CD4-positive, alpha-beta T cell (primary cell): ENCODE measurements at regions of chr19 and their contacts with region 1.

Region 1: DNA sequence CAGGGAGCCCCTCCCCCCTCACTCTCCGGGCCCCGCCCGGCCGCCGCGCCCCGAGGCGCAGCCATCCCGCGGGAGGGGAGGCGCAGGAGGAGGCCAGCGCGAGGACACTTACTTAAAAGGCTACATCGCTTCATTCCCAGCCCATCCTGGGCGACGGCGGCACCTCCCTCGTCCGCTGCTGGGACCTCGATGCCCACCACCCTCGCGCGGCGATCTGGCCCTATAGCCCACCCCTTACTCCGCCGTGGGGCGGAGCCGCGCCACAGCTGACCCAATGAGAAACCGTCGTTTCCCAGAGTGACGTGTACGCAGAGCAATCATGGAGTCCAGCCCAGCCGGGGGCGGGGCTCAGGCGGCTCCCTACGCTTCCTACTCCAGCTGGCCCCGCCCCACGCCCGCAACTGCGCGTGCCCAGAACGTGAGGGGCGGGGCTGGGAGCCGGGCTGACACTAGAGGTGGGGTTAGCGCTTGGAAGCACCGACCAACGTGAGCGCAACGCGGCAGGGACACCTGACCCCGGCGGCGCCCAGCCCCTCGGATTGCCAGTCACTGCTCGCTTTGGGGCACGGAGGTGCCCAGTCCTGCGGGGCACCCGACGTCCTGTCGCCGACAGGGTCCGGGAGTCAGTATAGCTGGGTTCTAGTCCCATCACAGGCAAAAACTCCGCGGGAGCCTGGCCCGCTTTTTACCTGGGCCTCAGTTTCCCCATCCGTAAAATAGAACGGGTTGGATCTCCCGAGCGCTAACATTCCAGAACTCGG is at the start of gene ANKRD27:
- DNase-seq: peak; percentile 94 to 99 (median 98)
- ATAC-seq: peak; percentile 94
- H3K4me3 ChIP-seq: peak within 1 kb of the TSS; percentile 89
- H3K4me3 Mint-ChIP-seq: peak within 1 kb of the TSS; percentile 95
- H3K27ac ChIP-seq: peak within 1 kb of the TSS in 1 of 2 donors; percentile 80
- H3K27ac Mint-ChIP-seq: peak within 1 kb of the TSS; percentile 79
- H3K4me1 ChIP-seq: peaks cover 53% of the 10 kb centered on the region
- H3K4me1 Mint-ChIP-seq: peaks cover 50% of the 10 kb centered on the region
- H3K27me3 ChIP-seq: peaks cover 14 to 21% of the 10 kb centered on the region in 2 experiments
- H3K27me3 Mint-ChIP-seq: peaks cover 8% of the 10 kb centered on the region
- CTCF ChIP-seq: no peak
- total RNA-seq, gene ANKRD27: 16.5 to 17.6 TPM

Region 2: DNA sequence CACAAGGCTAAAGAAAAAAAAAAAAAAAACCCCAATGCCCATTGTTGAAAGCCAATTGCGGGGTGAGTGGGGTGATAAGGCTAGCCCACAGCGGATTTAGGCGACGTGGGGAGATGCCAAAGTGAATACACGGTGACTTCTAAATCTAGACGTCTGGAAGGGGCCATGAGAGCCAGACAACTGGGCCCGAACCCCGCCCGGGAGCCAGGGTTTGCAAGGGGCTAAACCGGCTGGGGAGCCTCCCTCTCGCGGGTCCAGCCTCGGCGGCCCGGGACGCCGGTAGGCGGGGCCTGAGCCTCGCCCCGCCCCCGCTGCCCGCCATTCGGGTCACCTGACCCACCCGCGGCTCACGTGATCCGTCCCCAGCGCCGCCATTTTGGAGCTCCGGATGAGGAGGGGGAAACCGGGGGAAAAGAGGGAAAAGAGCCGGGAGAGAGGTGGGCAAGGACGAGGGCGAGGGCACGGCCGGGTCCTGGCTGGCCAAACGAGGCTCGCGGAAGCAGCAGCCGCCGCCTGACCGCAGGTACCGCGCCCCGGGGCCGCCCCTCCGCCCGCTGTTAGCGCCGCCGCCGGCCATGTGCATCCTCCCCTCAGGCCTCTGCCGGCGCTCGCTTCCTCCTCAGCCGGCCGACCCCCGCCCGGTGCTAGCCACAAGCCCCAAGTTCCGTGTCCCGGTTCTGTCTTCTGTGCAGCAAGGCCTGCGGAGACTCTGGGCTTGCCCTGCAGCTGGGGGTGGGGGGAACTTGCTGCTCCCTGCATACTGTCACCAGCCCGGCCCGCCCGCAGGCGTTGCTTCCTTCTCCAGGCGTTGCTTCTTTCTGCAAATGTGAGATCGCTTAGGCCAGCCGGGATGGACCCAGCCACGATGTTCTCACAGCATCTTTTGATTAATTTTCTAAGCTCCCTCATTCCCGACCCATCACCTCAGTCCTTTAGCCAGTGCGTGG is 329.6 kb before region 1 on chr19 and contains the start of gene ZNF507:
- CTCF ChIA-PET with region 1: no interaction called
- POLR2A ChIA-PET with region 1: interaction called, 3 read pairs
- intact Hi-C with region 1: loop called in 1 of 2 experiments (anchors 10 kb)
- DNase-seq: peak; percentile 64 to 88 (median 75)
- ATAC-seq: peak; percentile 84
- H3K4me3 ChIP-seq: peak within 1 kb of the TSS; percentile 92
- H3K4me3 Mint-ChIP-seq: peak within 1 kb of the TSS; percentile 96
- H3K27ac ChIP-seq: peak within 1 kb of the TSS; percentile 58 to 82
- H3K27ac Mint-ChIP-seq: peak within 1 kb of the TSS; percentile 87
- H3K4me1 ChIP-seq: peaks cover 13% of the 10 kb centered on the region
- H3K4me1 Mint-ChIP-seq: peaks cover 50% of the 10 kb centered on the region
- H3K27me3 ChIP-seq: no peaks in the 10 kb centered on the region
- H3K27me3 Mint-ChIP-seq: peaks cover 5% of the 10 kb centered on the region
- CTCF ChIP-seq: no peak
- total RNA-seq, gene ZNF507: 30.4 to 31.3 TPM

Region 3: DNA sequence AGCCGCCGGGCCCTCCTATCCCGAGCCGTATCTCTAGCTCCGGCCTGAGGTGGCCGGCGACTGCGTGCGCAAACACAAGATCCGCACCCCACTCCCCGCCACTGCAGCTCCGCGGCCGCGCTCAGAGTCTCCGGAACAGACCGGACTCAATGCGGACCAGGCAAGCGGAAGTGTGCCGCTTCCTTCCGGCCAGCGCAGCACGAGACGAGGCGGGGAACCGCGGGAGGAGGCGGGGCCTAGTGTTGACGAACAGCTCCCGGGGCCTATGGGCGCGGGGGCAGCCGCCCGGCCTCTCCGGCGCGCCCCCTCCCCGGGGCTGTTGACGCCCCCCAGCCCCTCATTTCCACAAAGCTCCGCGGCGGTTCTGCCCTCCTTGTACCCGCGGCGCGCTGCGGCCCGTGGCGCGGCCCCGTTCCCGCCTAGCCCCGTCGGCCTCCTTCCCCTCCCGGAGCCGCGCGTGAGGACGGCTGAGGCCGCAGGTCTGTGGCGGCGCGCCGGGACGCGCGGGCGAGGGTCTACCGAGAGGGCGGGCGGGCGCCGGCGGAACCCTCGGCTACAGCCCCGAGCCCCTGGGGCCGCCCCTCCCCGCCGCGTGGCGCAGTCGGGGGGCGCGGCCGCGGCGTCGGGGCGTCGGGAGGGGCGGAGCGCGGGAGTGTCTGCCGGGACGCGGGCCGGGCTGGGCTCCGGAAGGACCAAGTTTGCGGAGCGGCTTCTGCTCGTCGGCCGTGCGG is 269.5 kb before region 1 on chr19 and contains the start of gene DPY19L3:
- CTCF ChIA-PET with region 1: no interaction called
- POLR2A ChIA-PET with region 1: interaction called, 6 read pairs
- intact Hi-C with region 1: loop called in 1 of 2 experiments (anchors 10 kb)
- DNase-seq: peak; percentile 77 to 93 (median 85)
- ATAC-seq: peak; percentile 88
- H3K4me3 ChIP-seq: peak within 1 kb of the TSS; percentile 76
- H3K4me3 Mint-ChIP-seq: peak within 1 kb of the TSS; percentile 89
- H3K27ac ChIP-seq: peak within 1 kb of the TSS; percentile 72 to 80
- H3K27ac Mint-ChIP-seq: peak within 1 kb of the TSS; percentile 91
- H3K4me1 ChIP-seq: peaks cover 19% of the 10 kb centered on the region
- H3K4me1 Mint-ChIP-seq: peaks cover 30% of the 10 kb centered on the region
- H3K27me3 ChIP-seq: no peaks in the 10 kb centered on the region
- H3K27me3 Mint-ChIP-seq: no peaks in the 10 kb centered on the region
- CTCF ChIP-seq: no peak
- total RNA-seq, gene DPY19L3: 7.3 to 8.5 TPM

Region 4: DNA sequence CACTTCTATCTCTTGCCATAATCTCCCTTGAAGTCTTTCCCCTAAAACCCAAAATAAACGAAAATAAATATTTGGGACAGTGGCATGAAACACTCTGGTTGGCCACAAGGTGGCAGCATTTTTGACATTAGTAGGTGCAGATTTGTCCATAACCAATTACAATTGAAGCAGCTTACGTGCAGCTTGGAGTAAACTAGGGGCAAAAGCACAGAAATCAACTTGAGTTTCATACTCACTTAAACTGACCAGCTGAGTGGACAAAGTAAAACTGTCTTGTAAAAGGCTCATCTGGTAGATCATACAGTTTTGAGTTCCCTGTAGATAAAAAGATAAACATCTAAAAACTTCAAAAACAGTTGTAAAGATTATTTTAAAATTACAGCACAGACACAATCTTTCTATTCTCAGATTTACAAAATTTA is 75.4 kb before region 1 on chr19:
- CTCF ChIA-PET with region 1: interaction called, 3 read pairs
- POLR2A ChIA-PET with region 1: interaction called, 3 read pairs
- intact Hi-C with region 1: loop called in 1 of 2 experiments (anchors 5 kb)
- DNase-seq: peak in 11 of 14 experiments; percentile 7 to 82 (median 33)
- ATAC-seq: peak; percentile 75
- H3K4me3 ChIP-seq: no peak overlapping the region
- H3K4me3 Mint-ChIP-seq: no peak overlapping the region
- H3K27ac ChIP-seq: no peak overlapping the region
- H3K27ac Mint-ChIP-seq: no peak overlapping the region
- H3K4me1 ChIP-seq: no peaks in the 10 kb centered on the region
- H3K4me1 Mint-ChIP-seq: peaks cover 6% of the 10 kb centered on the region
- H3K27me3 ChIP-seq: no peaks in the 10 kb centered on the region
- H3K27me3 Mint-ChIP-seq: no peaks in the 10 kb centered on the region
- CTCF ChIP-seq: peak; percentile 85

Region 5: GRCh38 chr19:32642771-32643170 is 32.4 kb before region 1 on chr19:
- CTCF ChIA-PET with region 1: no interaction called
- POLR2A ChIA-PET with region 1: interaction called, 3 read pairs
- intact Hi-C with region 1: loop called (anchors 2 to 5 kb)
- DNase-seq: peak; percentile 39 to 84 (median 61)
- ATAC-seq: peak; percentile 98
- H3K4me3 ChIP-seq: no peak overlapping the region
- H3K4me3 Mint-ChIP-seq: peak overlapping the region; percentile 71
- H3K27ac ChIP-seq: peak overlapping the region in 1 of 2 donors; percentile 30
- H3K27ac Mint-ChIP-seq: peak overlapping the region; percentile 76
- H3K4me1 ChIP-seq: peaks cover 28% of the 10 kb centered on the region
- H3K4me1 Mint-ChIP-seq: peaks cover 28% of the 10 kb centered on the region
- H3K27me3 ChIP-seq: no peaks in the 10 kb centered on the region
- H3K27me3 Mint-ChIP-seq: no peaks in the 10 kb centered on the region
- CTCF ChIP-seq: no peak

Region 6: DNA sequence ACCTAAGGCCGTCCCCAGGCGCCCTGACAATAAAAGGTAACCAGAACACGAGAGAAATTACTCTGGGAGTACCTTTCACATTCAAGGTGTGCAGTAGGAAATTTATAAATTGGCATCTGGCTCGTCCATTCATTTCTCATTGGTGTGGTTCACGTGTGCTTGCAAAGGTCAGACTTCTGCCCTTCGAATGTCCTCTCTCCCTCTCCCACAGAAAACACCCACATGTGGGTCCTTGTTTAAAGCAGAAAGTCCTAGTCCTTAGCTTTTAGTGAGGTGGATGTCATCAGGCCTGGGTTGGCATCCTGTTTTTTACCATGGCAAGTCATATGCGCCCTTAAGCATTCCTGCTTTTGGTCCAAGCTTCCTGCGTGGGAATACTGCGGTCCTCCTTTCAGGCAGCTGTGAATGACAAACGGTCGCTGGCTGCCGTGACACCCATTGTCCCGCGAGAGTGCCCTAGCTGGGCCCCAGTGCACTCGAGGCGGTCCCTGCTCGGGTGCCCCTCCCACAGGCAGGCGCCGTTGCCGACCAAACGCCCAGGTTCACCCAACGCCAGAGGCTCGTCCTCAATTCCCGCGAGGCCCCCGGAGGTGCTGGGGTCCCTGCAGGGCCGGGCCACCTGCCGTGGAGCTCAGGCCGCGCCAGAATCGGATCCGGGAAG is 16.3 kb after region 1 on chr19 and contains the start of gene NUDT19:
- CTCF ChIA-PET with region 1: interaction called, 5 read pairs
- POLR2A ChIA-PET with region 1: interaction called, 58 read pairs
- intact Hi-C with region 1: loop called in 1 of 2 experiments (anchors 2 kb)
- DNase-seq: peak; percentile 50 to 86 (median 72)
- ATAC-seq: peak; percentile 77
- H3K4me3 ChIP-seq: peak within 1 kb of the TSS; percentile 65
- H3K4me3 Mint-ChIP-seq: peak within 1 kb of the TSS; percentile 96
- H3K27ac ChIP-seq: peak within 1 kb of the TSS; percentile 31 to 55
- H3K27ac Mint-ChIP-seq: peak within 1 kb of the TSS; percentile 80
- H3K4me1 ChIP-seq: peaks cover 44% of the 10 kb centered on the region
- H3K4me1 Mint-ChIP-seq: peaks cover 51% of the 10 kb centered on the region
- H3K27me3 ChIP-seq: no peaks in the 10 kb centered on the region
- H3K27me3 Mint-ChIP-seq: no peaks in the 10 kb centered on the region
- CTCF ChIP-seq: no peak
- total RNA-seq, gene NUDT19: 7.9 to 8.2 TPM

Region 7: DNA sequence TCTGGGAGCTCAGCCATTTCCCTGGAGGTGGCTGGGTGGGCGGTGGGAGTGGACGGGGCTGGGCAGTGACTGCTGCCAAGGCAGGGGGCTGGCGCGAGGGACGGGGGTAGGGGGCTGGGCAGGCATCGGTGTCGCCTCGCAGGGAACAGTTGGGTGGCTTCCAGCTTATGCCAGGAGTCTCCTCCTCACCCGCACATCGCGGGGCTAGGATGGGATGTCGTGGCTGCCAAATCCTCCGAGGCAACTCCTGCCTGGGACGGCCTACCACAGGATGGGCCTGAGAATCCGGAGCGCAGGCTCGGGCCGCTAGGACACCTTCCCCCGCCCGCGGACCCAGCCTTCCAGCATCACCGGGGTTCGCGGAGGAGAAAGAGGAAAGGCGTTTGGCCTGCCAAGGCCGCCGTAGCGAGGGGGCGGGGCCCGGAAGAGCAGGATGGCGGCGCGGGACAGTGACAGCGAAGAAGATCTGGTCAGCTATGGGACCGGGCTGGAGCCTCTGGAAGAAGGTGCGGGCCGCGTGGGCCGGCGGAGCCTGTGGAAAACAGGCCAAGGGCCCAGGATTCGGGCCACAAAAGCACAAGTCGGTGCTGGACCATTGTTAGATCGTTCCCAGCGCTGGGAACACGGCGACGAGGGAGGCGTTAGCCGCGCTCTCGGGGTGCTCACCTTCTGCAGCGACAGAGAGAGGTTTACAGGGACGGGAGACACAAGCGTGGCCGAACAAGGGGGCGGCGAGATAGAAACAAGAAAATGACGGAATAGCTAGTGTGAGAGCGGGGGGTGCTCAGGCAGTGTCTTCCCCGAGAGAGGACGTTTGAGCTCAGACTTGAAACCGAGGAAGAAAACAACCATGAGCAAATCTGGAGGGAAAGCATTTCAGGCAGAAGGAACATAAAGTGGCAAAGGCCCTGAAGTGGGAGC is 405.9 kb after region 1 on chr19 and contains the start of gene GPATCH1:
- CTCF ChIA-PET with region 1: interaction called, 5 read pairs
- POLR2A ChIA-PET with region 1: no interaction called
- intact Hi-C with region 1: loop called in 1 of 2 experiments (anchors 10 kb)
- DNase-seq: peak; percentile 70 to 90 (median 80)
- ATAC-seq: peak; percentile 94
- H3K4me3 ChIP-seq: peak within 1 kb of the TSS; percentile 86
- H3K4me3 Mint-ChIP-seq: peak within 1 kb of the TSS; percentile 97
- H3K27ac ChIP-seq: peak within 1 kb of the TSS; percentile 59 to 71
- H3K27ac Mint-ChIP-seq: peak within 1 kb of the TSS; percentile 89
- H3K4me1 ChIP-seq: peaks cover 22% of the 10 kb centered on the region
- H3K4me1 Mint-ChIP-seq: peaks cover 23% of the 10 kb centered on the region
- H3K27me3 ChIP-seq: no peaks in the 10 kb centered on the region
- H3K27me3 Mint-ChIP-seq: no peaks in the 10 kb centered on the region
- CTCF ChIP-seq: no peak
- total RNA-seq, gene GPATCH1: 4.6 to 5.5 TPM